CD14-positive monocyte (primary cell): ENCODE measurements at regions of chr11 and their contacts with region 1.

Region 1: GRCh38 chr11:118145285-118146227 is 7.1 kb downstream of the SCN4B start:
- DNase-seq: peak; percentile 64 to 78 (median 73)
- H3K4me3 ChIP-seq: peak overlapping the region; percentile 62 to 84 (median 68)
- H3K4me3 Mint-ChIP-seq: peak overlapping the region; percentile 80 to 86
- H3K27ac ChIP-seq: no peak overlapping the region
- H3K27ac Mint-ChIP-seq: peak overlapping the region in 1 of 7 donors; percentile 10
- H3K4me1 ChIP-seq: peaks cover 34 to 48% of the 10 kb centered on the region in 2 donors
- H3K4me1 Mint-ChIP-seq: peaks cover 48% of the 10 kb centered on the region
- H3K27me3 ChIP-seq: peaks cover 0 to 8% of the 10 kb centered on the region in 2 donors
- H3K27me3 Mint-ChIP-seq: peaks cover 9 to 17% (median 12%) of the 10 kb centered on the region in 3 donors
- CTCF ChIP-seq: peak; percentile 88

Region 2: GRCh38 chr11:117828611-117829368 is 316.8 kb before region 1 on chr11:
- intact Hi-C with region 1: loop called in 1 of 2 experiments (anchors 10 kb)
- DNase-seq: peak; percentile 90 to 95 (median 91)
- H3K4me3 ChIP-seq: no peak overlapping the region
- H3K4me3 Mint-ChIP-seq: peak overlapping the region; percentile 9 to 11
- H3K27ac ChIP-seq: peak overlapping the region; percentile 30 to 82
- H3K27ac Mint-ChIP-seq: peak overlapping the region in 6 of 7 donors; percentile 74 to 89 (median 84)
- H3K4me1 ChIP-seq: peaks cover 67 to 77% of the 10 kb centered on the region in 2 donors
- H3K4me1 Mint-ChIP-seq: peaks cover 78% of the 10 kb centered on the region
- H3K27me3 ChIP-seq: no peaks in the 10 kb centered on the region
- H3K27me3 Mint-ChIP-seq: peaks cover 0 to 4% (median 0%) of the 10 kb centered on the region in 3 donors
- CTCF ChIP-seq: no peak

Region 3: GRCh38 chr11:118129471-118130172 is 15.9 kb before region 1 on chr11:
- intact Hi-C with region 1: loop called in 1 of 2 experiments (anchors 1 kb)
- DNase-seq: peak; percentile 28 to 47 (median 45)
- H3K4me3 ChIP-seq: peak overlapping the region in 1 of 3 experiments; percentile 6
- H3K4me3 Mint-ChIP-seq: peak overlapping the region in 1 of 2 donors; percentile 29
- H3K27ac ChIP-seq: peak overlapping the region in 1 of 2 donors; percentile 10
- H3K27ac Mint-ChIP-seq: peak overlapping the region in 5 of 7 donors; percentile 63 to 92 (median 80)
- H3K4me1 ChIP-seq: peaks cover 21 to 26% of the 10 kb centered on the region in 2 donors
- H3K4me1 Mint-ChIP-seq: peaks cover 29% of the 10 kb centered on the region
- H3K27me3 ChIP-seq: no peaks in the 10 kb centered on the region
- H3K27me3 Mint-ChIP-seq: peaks cover 3 to 7% (median 5%) of the 10 kb centered on the region in 3 donors
- CTCF ChIP-seq: no peak

Region 4: GRCh38 chr11:118198370-118198769 is 52.8 kb after region 1 on chr11:
- intact Hi-C with region 1: no loop called
- DNase-seq: peak in 2 of 3 donors; percentile 57 to 67
- H3K4me3 ChIP-seq: no peak overlapping the region
- H3K4me3 Mint-ChIP-seq: no peak overlapping the region
- H3K27ac ChIP-seq: peak overlapping the region in 1 of 2 donors; percentile 5
- H3K27ac Mint-ChIP-seq: peak overlapping the region in 5 of 7 donors; percentile 12 to 61 (median 33)
- H3K4me1 ChIP-seq: peaks cover 8 to 12% of the 10 kb centered on the region in 2 donors
- H3K4me1 Mint-ChIP-seq: peaks cover 18% of the 10 kb centered on the region
- H3K27me3 ChIP-seq: no peaks in the 10 kb centered on the region
- H3K27me3 Mint-ChIP-seq: no peaks in the 10 kb centered on the region
- CTCF ChIP-seq: peak; percentile 93

Region 5: DNA sequence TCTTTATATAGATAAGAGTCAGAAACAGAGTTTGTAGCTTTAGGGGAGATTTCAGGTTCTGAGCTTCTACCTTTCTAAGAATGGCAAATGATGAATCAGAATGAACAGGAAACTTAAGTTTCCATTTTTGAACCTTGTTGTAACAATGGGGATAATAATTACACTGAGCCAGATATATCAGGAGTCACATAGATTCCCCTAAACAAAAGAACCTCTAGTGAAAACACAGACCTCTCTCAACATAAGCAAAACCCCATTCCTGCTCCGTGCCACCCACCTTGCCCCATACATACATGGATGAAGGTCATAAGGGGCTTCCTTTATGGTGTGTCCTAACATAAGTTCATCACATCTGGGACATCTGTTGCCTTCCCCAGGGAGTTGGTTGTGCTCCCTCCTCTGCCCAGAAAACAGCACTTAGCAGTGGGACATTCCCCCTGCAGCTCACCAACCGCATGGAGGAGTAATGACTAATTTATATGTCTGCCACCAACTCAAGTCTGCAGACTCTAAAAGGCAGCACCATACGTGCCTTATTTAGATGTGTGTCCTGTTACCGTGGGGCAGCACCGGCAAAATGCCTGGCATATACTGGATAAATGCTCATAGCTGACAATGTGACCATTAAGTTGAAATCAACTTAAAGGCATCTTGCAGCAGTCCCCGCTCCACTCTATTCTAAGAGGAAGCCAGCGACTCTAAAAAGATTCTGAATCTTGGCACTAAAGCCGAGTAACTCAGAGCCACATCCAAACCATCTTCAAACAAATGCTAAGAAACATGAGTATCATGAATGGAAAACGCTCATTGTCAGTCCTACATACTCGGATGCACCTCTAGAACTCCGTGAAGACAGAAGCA is 71.3 kb after region 1 on chr11:
- intact Hi-C with region 1: loop called in 1 of 2 experiments (anchors 10 kb)
- DNase-seq: peak in 1 of 3 donors; percentile 58
- H3K4me3 ChIP-seq: peak overlapping the region in 2 of 3 experiments; percentile 35 to 82
- H3K4me3 Mint-ChIP-seq: peak overlapping the region; percentile 62 to 88
- H3K27ac ChIP-seq: peak overlapping the region in 1 of 2 donors; percentile 82
- H3K27ac Mint-ChIP-seq: peak overlapping the region; percentile 79 to 95 (median 90)
- H3K4me1 ChIP-seq: peaks cover 100% of the 10 kb centered on the region in 2 donors
- H3K4me1 Mint-ChIP-seq: peaks cover 98% of the 10 kb centered on the region
- H3K27me3 ChIP-seq: no peaks in the 10 kb centered on the region
- H3K27me3 Mint-ChIP-seq: peaks cover 0 to 3% (median 1%) of the 10 kb centered on the region in 3 donors
- CTCF ChIP-seq: no peak

Region 6: GRCh38 chr11:118359295-118359958 is 213.9 kb after region 1 on chr11 and contains the start of gene UBE4A:
- intact Hi-C with region 1: loop called (anchors 5 kb)
- DNase-seq: peak; percentile 95 to 99 (median 98)
- H3K4me3 ChIP-seq: peak within 1 kb of the TSS; percentile 70 to 100 (median 98)
- H3K4me3 Mint-ChIP-seq: peak within 1 kb of the TSS; percentile 98 to 99
- H3K27ac ChIP-seq: peak within 1 kb of the TSS; percentile 46 to 97
- H3K27ac Mint-ChIP-seq: peak within 1 kb of the TSS; percentile 93 to 99 (median 96)
- H3K4me1 ChIP-seq: peaks cover 12 to 20% of the 10 kb centered on the region in 2 donors
- H3K4me1 Mint-ChIP-seq: peaks cover 28% of the 10 kb centered on the region
- H3K27me3 ChIP-seq: no peaks in the 10 kb centered on the region
- H3K27me3 Mint-ChIP-seq: peaks cover 5 to 11% (median 7%) of the 10 kb centered on the region in 3 donors
- CTCF ChIP-seq: no peak
- polyA plus RNA-seq, gene UBE4A: 21.6 to 33.9 (median 22.7) TPM